Naive thymus-derived CD4-positive, alpha-beta T cell (primary cell): ENCODE measurements at regions of chr4 and their contacts with region 1.

Region 1: DNA sequence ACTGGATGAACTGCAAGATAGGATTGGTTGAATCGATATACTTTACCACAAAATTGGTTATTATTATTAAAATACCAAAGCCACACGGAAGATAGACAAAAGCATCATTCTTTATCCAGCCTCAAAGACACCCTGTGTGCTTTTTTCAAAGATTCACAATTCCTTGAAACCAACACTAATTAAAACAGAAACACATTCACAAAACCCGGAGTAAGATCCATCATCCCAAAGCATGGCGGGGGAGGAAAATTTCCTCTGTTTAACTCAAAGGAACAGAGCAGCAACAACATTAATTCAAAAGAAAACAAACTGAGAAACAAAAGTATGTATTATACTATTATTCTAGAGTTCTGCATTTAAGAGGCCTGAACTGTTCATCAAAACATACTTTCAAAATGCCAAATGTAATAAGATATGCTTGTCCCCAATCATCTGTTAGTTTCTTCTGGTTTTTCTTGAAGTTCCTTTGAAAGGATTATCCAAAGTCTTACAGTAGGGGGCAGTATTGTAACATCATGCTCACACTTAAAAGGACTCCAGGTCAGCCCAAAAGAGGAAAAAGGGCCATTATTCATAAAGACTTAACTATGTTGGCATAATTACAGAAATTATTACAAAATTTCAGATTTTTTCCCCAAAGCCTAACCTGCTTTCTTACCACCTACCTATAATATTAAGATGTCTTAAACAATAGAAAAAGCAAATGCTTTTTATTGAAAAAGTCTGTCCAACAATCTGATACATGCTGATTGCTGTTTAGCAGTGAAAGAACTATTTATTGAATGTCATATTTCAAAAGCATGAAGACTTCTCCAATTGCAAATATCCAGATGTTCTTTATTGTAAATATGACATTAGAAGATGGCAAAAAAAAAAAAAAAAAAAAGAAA is 168.7 kb downstream of the SCFD2 start:
- DNase-seq: peak in 7 of 9 donors; percentile 13 to 60 (median 53)
- ATAC-seq: peak; percentile 61
- H3K4me3 ChIP-seq: no peak overlapping the region
- H3K4me3 Mint-ChIP-seq: no peak overlapping the region
- H3K27ac ChIP-seq: no peak overlapping the region
- H3K27ac Mint-ChIP-seq: peak overlapping the region in 1 of 9 donors; percentile 62
- H3K4me1 ChIP-seq: no peaks in the 10 kb centered on the region
- H3K4me1 Mint-ChIP-seq: no peaks in the 10 kb centered on the region
- H3K27me3 ChIP-seq: no peaks in the 10 kb centered on the region
- H3K27me3 Mint-ChIP-seq: no peaks in the 10 kb centered on the region

Region 2: DNA sequence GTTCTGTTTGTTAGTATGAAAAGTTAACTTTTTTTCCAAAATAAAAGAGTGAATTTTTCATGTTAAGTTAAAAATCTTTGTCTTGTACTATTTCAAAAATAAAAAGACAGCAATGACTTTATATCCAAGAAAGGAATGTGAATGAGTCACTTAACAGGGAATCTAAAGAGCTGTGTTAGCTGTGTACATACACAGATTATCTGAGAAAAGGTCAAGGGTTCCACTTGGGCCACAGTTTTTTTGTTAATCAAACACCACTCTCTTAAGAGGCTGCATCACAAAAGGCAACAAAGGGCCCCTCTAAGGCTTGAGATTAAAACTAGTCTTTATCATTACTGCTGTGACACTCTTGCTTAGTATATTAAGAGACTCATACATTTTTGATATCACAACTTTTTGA is 262.4 kb after region 1 on chr4:
- CTCF ChIA-PET with region 1: no interaction called
- POLR2A ChIA-PET with region 1: no interaction called
- intact Hi-C with region 1: loop called in 1 of 2 experiments (anchors 5 kb)
- DNase-seq: no peak
- ATAC-seq: no peak
- H3K4me3 ChIP-seq: no peak overlapping the region
- H3K4me3 Mint-ChIP-seq: no peak overlapping the region
- H3K27ac ChIP-seq: no peak overlapping the region
- H3K27ac Mint-ChIP-seq: no peak overlapping the region
- H3K4me1 ChIP-seq: no peaks in the 10 kb centered on the region
- H3K4me1 Mint-ChIP-seq: peaks cover 0 to 6% (median 3%) of the 10 kb centered on the region in 7 donors
- H3K27me3 ChIP-seq: no peaks in the 10 kb centered on the region
- H3K27me3 Mint-ChIP-seq: no peaks in the 10 kb centered on the region

Region 3: DNA sequence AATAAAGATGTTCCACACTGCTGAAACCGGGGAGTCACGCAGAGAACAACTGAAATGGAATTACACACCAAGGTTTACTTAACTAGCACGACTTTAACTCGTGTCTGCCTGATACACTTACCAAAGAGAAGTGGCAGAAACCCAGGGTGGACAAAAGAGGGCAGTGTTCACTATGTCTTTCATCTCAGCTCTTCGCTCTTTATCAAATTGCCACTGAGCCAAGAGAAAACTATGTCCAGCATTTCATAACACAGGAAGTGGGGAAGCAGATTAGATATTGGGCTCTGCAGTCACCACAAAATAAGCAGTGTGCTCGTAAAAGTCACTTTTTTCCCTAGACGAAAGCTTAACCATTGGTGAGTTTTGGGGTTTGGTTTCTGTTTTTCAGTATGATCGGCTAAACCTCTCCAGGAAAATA is 711.5 kb after region 1 on chr4:
- CTCF ChIA-PET with region 1: no interaction called
- POLR2A ChIA-PET with region 1: no interaction called
- intact Hi-C with region 1: loop called (anchors 2 kb)
- DNase-seq: peak in 4 of 9 donors; percentile 6 to 28 (median 18)
- ATAC-seq: peak; percentile 82
- H3K4me3 ChIP-seq: no peak overlapping the region
- H3K4me3 Mint-ChIP-seq: peak overlapping the region in 4 of 10 donors; percentile 9 to 45 (median 30)
- H3K27ac ChIP-seq: no peak overlapping the region
- H3K27ac Mint-ChIP-seq: no peak overlapping the region
- H3K4me1 ChIP-seq: no peaks in the 10 kb centered on the region
- H3K4me1 Mint-ChIP-seq: peaks cover 0 to 20% (median 12%) of the 10 kb centered on the region in 7 donors
- H3K27me3 ChIP-seq: no peaks in the 10 kb centered on the region
- H3K27me3 Mint-ChIP-seq: peaks cover 32 to 60% (median 48%) of the 10 kb centered on the region in 5 donors

Region 4: GRCh38 chr4:54099748-54100574 is 902.8 kb after region 1 on chr4 and contains the start of gene GSX2:
- CTCF ChIA-PET with region 1: no interaction called
- POLR2A ChIA-PET with region 1: no interaction called
- intact Hi-C with region 1: loop called in 1 of 2 experiments (anchors 10 kb)
- DNase-seq: no peak
- ATAC-seq: peak; percentile 17
- H3K4me3 ChIP-seq: peak within 1 kb of the TSS; percentile 38
- H3K4me3 Mint-ChIP-seq: peak within 1 kb of the TSS; percentile 46 to 81 (median 72)
- H3K27ac ChIP-seq: no peak within 1 kb of the TSS
- H3K27ac Mint-ChIP-seq: peak within 1 kb of the TSS in 2 of 9 donors; percentile 38 to 56
- H3K4me1 ChIP-seq: peaks cover 20 to 24% of the 10 kb centered on the region in 2 donors
- H3K4me1 Mint-ChIP-seq: peaks cover 19 to 50% (median 33%) of the 10 kb centered on the region in 7 donors
- H3K27me3 ChIP-seq: peaks cover 22 to 46% of the 10 kb centered on the region in 2 donors
- H3K27me3 Mint-ChIP-seq: peaks cover 79 to 93% (median 88%) of the 10 kb centered on the region in 5 donors
- total RNA-seq, gene GSX2: not detected